Astrocyte of the cerebellum (primary cell): ENCODE measurements at regions of chr1 and their contacts with region 1.

Region 1: DNA sequence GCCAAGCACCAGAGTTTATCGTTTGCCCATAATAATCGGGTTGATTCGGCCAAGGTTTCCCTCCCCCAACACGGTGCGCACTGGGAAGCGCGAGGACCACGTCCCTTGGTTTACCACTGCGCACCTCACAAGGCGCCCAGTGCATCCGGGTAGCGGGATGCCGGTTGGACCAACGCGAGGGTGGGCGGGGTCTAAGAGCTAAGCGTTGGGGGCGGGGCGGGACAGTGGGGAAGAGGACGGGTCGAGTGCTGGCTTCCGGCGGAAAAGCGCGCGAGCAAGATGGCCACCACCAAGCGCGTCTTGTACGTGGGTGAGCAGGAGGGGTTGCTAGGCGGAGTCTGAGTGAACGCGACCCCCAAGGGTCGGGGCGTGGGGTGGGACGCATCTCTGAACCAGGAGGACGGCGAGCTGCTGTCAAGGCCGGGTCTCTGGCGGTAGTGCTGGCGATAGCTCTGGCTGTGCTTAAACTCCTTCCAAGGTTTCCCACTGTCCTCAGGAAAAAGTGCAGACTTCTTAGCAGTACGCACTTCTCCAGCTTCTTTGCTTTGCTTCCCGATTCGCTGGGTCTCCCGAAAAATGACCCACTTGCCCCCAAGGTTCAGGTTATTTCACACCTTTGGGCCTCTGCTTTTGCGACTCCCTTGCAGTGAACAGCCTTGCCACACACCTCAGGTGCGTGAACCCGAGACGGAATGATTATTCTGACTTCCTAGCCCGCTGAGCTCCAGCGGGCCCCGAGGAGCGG is at the start of gene PPIE:
- DNase-seq: peak; percentile 71
- H3K4me3 ChIP-seq: peak within 1 kb of the TSS; percentile 90
- CTCF ChIP-seq: no peak

Region 2: DNA sequence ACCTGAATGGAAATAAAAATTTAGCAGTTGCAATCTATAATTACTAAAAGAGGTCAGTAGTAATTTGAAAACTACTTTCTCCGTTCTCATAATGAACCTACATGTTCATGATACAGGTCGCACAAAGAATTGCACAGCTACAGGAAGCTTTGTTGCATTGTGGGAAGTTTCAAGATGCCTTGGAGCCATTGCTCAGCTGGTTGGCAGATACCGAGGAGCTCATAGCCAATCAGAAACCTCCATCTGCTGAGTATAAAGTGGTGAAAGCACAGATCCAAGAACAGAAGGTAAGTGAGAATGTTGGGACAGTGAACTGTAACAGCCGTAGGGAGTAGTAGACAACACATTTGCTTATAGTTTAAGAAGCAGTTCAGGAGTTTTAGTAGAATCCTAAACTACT is 316.2 kb before region 1 on chr1:
- in situ Hi-C with region 1: loop called (anchors 10 kb)
- DNase-seq: no peak
- H3K4me3 ChIP-seq: no peak overlapping the region
- CTCF ChIP-seq: no peak

Region 3: GRCh38 chr1:39639305-39640130 is 99.3 kb before region 1 on chr1 and contains the start of gene HEYL:
- in situ Hi-C with region 1: loop called (anchors 10 kb)
- DNase-seq: no peak
- H3K4me3 ChIP-seq: no peak within 1 kb of the TSS
- CTCF ChIP-seq: no peak

Region 4: GRCh38 chr1:39691262-39692151 is 47.3 kb before region 1 on chr1 and contains the start of gene HPCAL4:
- in situ Hi-C with region 1: loop called (anchors 5 kb)
- DNase-seq: no peak
- H3K4me3 ChIP-seq: peak within 1 kb of the TSS; percentile 22
- CTCF ChIP-seq: no peak

Region 5: DNA sequence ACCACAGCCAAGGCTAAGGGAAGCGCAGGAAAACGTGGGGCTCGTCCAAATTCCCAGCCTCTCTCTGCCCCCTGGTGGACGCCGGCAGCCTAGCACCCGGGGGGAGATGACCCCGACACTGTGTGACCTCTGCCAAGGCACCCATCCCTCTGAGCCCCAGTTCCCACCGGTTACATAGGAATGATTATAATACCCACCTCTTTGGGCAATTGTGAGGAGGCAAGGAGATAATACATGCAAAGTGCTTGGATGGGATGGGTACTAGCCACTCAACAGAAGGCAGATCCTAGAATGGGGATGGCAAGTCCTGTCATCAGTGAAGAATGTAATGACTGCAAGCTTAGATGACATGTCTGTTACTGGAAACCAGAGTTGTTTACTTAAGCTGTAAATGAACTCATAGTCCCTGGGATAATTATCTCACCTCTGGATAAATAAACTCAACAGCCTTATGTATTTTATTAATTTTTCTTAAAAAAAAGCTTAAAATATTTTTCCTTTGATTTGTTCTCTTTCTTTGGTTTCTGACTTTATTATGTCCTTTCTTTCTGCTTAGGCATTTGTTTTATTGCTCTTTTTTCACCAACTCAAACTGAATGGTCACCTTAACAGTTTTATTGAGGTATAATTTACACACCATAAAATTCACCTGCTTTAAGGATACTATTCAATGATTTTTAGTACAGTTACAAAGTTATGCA is 61.1 kb after region 1 on chr1:
- in situ Hi-C with region 1: loop called (anchors 10 kb)
- DNase-seq: no peak
- H3K4me3 ChIP-seq: no peak overlapping the region
- CTCF ChIP-seq: peak; percentile 65